ENCODE measurements at regions of chr13 and their contacts with region 1.

Region 1: DNA sequence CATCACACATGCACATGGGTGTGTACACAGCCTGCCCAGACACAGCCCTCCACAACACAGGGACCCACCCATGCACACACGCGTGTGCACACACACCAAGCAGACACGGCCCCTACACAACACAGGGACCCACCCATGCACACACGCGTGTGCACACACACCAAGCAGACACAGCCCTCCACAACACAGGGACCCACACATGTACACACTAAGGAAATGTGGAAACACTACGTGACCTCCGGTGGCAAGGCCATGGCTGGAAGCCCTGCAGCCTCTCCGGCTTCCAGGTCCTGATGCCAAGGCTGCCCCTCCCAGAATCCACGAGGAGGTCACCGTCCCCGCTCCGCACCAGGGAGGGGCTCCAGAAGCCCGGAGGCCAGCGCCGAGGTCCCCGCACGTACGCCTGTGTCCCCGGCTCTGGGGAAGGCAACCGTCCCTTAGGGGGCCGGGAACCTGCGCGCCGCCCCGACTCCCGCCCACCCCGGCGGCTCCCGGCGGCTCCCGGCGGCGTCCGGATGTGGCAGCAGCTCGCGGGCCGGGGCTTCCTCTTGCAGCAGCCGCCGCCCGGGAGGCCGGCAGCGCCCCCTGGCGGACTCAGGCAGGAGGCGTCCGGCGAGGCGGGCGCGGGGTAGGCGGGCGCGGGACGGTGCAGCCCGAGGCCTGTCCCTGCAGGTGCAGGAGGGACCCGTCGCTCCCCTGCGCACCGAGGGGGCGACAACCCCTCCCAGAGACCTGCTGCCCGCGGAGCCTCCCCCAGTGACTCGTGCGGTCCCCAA is 29.8 kb upstream of the GRTP1 start:
- H3K4me3 Mint-ChIP-seq: peak overlapping the region; percentile 67
- H3K27ac Mint-ChIP-seq: peak overlapping the region; percentile 52
- H3K4me1 Mint-ChIP-seq: peaks cover 6% of the 10 kb centered on the region
- H3K27me3 Mint-ChIP-seq: peaks cover 26% of the 10 kb centered on the region

Region 2: GRCh38 chr13:112942689-112943308 is 451.0 kb before region 1 on chr13:
- intact Hi-C with region 1: loop called (anchors 1 kb)
- H3K4me3 Mint-ChIP-seq: peak overlapping the region; percentile 68
- H3K27ac Mint-ChIP-seq: no peak overlapping the region
- H3K4me1 Mint-ChIP-seq: peaks cover 11% of the 10 kb centered on the region
- H3K27me3 Mint-ChIP-seq: peaks cover 52% of the 10 kb centered on the region

Region 3: GRCh38 chr13:113216254-113217048 is 177.3 kb before region 1 on chr13:
- intact Hi-C with region 1: loop called (anchors 5 kb)
- H3K4me3 Mint-ChIP-seq: no peak overlapping the region
- H3K27ac Mint-ChIP-seq: no peak overlapping the region
- H3K4me1 Mint-ChIP-seq: peaks cover 27% of the 10 kb centered on the region
- H3K27me3 Mint-ChIP-seq: no peaks in the 10 kb centered on the region